Right cardiac atrium (tissue), 5 donors: ENCODE measurements at regions of chr12 and their contacts with region 1.

Region 1: GRCh38 chr12:123478762-123479161 is 20.8 kb downstream of the SNRNP35 start:
- DNase-seq: peak; percentile 65 to 83 (median 82)
- ATAC-seq: peak; percentile 85 to 87
- H3K4me3 ChIP-seq: no peak overlapping the region
- H3K27ac ChIP-seq: peak overlapping the region; percentile 89
- H3K4me1 ChIP-seq: no peaks in the 10 kb centered on the region
- H3K27me3 ChIP-seq: no peaks in the 10 kb centered on the region

Region 2: DNA sequence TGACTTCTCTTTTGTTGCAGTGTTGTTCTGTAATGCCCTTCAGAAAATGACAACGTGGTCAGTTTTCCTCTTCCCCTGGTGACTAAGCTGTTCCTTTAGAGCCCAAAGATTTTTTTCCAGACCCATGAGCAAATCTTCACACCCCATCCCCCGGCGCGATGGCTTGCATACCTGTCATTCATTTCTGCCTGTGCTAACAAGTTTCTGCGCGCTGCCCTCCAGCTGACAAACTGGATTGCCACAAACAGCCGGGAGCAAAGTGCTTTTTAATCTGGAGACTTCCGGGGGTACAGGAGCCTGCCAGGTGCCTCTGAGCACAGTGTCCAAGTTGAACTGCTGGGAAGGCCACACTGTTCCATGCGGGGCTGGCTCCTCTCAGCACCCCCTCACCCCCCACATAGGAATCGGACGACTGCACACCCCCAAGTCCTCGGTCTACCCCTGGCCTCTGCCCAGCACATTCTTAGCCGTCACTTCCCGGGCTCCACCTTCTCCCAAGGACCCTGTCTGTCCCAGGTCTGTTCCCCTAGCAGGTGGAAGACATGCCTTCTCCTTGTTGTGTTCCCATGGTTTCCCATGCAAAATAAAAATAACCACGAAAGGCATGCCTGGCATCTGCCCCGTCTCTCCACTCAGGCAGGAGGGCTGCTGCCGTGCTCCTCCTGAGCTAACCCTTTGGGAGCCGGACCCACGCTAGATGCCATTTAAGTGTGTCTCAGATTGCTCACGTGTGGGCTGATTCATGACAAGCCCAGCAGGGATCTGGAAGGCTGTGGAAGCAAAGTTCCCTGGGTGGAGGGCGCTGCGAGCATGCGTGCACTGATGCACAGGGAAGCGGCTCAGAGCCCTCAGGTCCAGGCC is 40.6 kb after region 1 on chr12:
- intact Hi-C with region 1: loop called in 1 of 4 experiments (anchors 5 kb)
- DNase-seq: peak; percentile 64 to 84 (median 80)
- ATAC-seq: peak; percentile 69 to 81
- H3K4me3 ChIP-seq: no peak overlapping the region
- H3K27ac ChIP-seq: peak overlapping the region; percentile 90
- H3K4me1 ChIP-seq: no peaks in the 10 kb centered on the region
- H3K27me3 ChIP-seq: no peaks in the 10 kb centered on the region

Region 3: GRCh38 chr12:123614531-123614930 is 135.8 kb after region 1 on chr12:
- intact Hi-C with region 1: no loop called
- DNase-seq: peak; percentile 17 to 57 (median 52)
- ATAC-seq: peak; percentile 60
- H3K4me3 ChIP-seq: no peak overlapping the region
- H3K27ac ChIP-seq: peak overlapping the region; percentile 45
- H3K4me1 ChIP-seq: peaks cover 2% of the 10 kb centered on the region
- H3K27me3 ChIP-seq: no peaks in the 10 kb centered on the region